Colonic mucosa (tissue), 4 donors: ENCODE measurements at regions of chr3 and their contacts with region 1.

Region 1: GRCh38 chr3:57169872-57170623 is 4.9 kb upstream of the IL17RD start:
- DNase-seq: peak; percentile 69
- H3K4me3 ChIP-seq: peak overlapping the region; percentile 33
- H3K27ac ChIP-seq: no peak overlapping the region
- H3K4me1 ChIP-seq: no peaks in the 10 kb centered on the region
- H3K27me3 ChIP-seq: no peaks in the 10 kb centered on the region
- CTCF ChIP-seq: peak; percentile 83

Region 2: GRCh38 chr3:57100046-57100695 is 69.9 kb before region 1 on chr3:
- intact Hi-C with region 1: loop called (anchors 10 kb)
- DNase-seq: peak; percentile 83
- H3K4me3 ChIP-seq: no peak overlapping the region
- H3K27ac ChIP-seq: no peak overlapping the region
- H3K4me1 ChIP-seq: no peaks in the 10 kb centered on the region
- H3K27me3 ChIP-seq: no peaks in the 10 kb centered on the region
- CTCF ChIP-seq: peak; percentile 89

Region 3: GRCh38 chr3:57227204-57227929 is 57.3 kb after region 1 on chr3 and contains the start of gene APPL1:
- intact Hi-C with region 1: loop called (anchors 5 kb)
- DNase-seq: peak; percentile 94
- H3K4me3 ChIP-seq: peak within 1 kb of the TSS; percentile 70
- H3K27ac ChIP-seq: peak within 1 kb of the TSS; percentile 91
- H3K4me1 ChIP-seq: no peaks in the 10 kb centered on the region
- H3K27me3 ChIP-seq: no peaks in the 10 kb centered on the region
- CTCF ChIP-seq: no peak
- total RNA-seq, gene APPL1: 25.8 to 34.9 TPM

Region 4: GRCh38 chr3:57451150-57451846 is 281.2 kb after region 1 on chr3:
- intact Hi-C with region 1: no loop called
- DNase-seq: no peak
- H3K4me3 ChIP-seq: no peak overlapping the region
- H3K27ac ChIP-seq: no peak overlapping the region
- H3K4me1 ChIP-seq: no peaks in the 10 kb centered on the region
- H3K27me3 ChIP-seq: no peaks in the 10 kb centered on the region
- CTCF ChIP-seq: no peak